AG04450 (cell line): ENCODE measurements at regions of chr11 and their contacts with region 1.

Region 1: DNA sequence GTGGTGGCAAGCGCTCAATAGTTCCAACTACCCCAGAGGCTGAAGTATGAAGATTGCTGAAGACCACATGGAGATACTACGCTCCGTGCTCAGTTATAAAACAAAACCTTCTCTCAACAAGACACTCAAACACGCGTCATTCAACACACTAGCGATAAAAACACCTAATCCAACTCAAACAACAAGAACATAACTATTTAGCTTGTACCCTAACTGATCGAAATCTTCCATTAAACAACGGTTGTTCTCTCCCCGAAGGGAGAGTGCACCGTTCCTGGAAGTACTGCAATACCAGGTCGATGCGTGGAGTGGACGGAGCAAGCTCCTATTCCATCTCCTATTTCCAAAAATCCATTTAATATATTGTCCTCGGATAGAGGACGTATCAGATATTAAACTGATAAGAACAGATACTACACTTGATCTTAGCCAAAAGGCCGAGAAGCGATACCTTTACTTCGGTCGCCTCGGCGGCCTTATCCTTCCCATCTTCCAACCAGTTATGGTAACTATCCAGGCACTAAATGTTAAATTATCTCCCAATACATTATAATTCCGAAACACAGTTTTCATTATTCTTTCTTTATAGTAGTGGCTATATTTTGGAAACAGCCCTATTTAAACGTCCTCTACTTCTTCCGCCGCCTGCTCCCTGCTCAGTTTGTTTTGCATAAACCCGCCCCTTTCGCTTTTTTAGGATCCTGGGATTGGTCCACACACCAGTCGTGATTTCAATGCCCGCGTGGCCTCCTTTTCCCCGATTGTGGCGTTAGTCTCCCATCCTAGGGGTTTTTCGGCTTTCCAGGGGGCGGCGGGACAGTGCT is 2.2 kb upstream of the WDR74 start:
- DNase-seq: peak; percentile 99
- H3K4me3 ChIP-seq: peak overlapping the region; percentile 50
- H3K27ac ChIP-seq: peak overlapping the region; percentile 97
- H3K27me3 ChIP-seq: no peaks in the 10 kb centered on the region
- CTCF ChIP-seq: no peak

Region 2: GRCh38 chr11:62621567-62622470 is 219.8 kb before region 1 on chr11 and contains the start of gene B3GAT3:
- CTCF ChIA-PET with region 1: no interaction called
- POLR2A ChIA-PET with region 1: interaction called, 11 read pairs
- DNase-seq: peak; percentile 96
- H3K4me3 ChIP-seq: peak within 1 kb of the TSS; percentile 86
- H3K27ac ChIP-seq: peak within 1 kb of the TSS; percentile 97
- H3K27me3 ChIP-seq: no peaks in the 10 kb centered on the region
- CTCF ChIP-seq: peak; percentile 13; the same call in 1 of the 2 replicates
- polyA plus RNA-seq, gene B3GAT3: 14.5 and 20.2 TPM in 2 replicates

Region 3: GRCh38 chr11:62726915-62727763 is 114.4 kb before region 1 on chr11 and contains the start of gene HNRNPUL2:
- CTCF ChIA-PET with region 1: no interaction called
- POLR2A ChIA-PET with region 1: interaction called, 41 read pairs
- DNase-seq: peak; percentile 99
- H3K4me3 ChIP-seq: peak within 1 kb of the TSS; percentile 99
- H3K27ac ChIP-seq: peak within 1 kb of the TSS; percentile 98
- H3K27me3 ChIP-seq: no peaks in the 10 kb centered on the region
- CTCF ChIP-seq: 0 out of 2 replicates have a peak, but pooled peaks have one; percentile 11
- polyA plus RNA-seq, gene HNRNPUL2: 26.6 and 28.2 TPM in 2 replicates

Region 4: GRCh38 chr11:62787005-62787759 is 54.4 kb before region 1 on chr11 and contains the start of gene TMEM179B:
- CTCF ChIA-PET with region 1: no interaction called
- POLR2A ChIA-PET with region 1: interaction called, 23 read pairs
- DNase-seq: peak; percentile 93
- H3K4me3 ChIP-seq: peak within 1 kb of the TSS; percentile 89
- H3K27ac ChIP-seq: peak within 1 kb of the TSS; percentile 73
- H3K27me3 ChIP-seq: no peaks in the 10 kb centered on the region
- CTCF ChIP-seq: peak; percentile 70
- polyA plus RNA-seq, gene TMEM179B: 51.7 and 63.8 TPM in 2 replicates

Region 5: DNA sequence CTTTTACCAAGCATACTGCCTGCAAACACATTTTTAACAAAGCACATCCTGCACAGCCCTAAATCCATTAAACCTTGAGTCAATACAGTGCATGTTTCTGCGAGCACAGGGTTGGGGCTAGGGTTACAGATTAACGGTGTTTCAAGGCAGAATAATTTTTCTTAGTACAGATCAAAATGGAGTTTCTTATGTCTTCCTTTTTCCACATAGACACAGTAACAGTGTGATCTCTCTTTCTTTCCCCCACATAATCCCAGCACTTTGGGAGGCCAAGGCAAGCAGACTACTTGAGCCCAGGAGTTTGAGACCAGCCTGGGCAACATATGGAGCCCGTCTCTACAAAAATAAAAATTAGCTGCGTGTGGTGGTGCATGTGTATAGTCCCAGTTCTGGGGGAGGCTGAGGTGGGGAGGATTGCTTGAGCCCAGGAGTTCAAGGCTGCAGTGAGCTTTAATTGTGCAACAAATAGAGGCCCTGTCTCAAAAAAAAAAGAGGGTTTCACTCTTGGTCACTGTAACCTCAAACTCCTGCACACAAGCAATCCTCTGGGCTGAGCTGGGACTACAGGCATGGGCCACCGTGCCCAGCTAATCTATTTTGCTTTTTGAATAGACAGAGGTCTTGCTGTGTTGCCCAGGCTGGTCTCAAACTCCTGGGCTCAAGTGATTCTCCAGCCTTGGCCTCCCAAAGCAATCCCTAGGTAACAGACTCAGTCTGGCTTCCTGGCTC is 19.4 kb after region 1 on chr11:
- CTCF ChIA-PET with region 1: interaction called, 3 read pairs
- POLR2A ChIA-PET with region 1: interaction called, 172 read pairs
- DNase-seq: no peak
- H3K4me3 ChIP-seq: no peak overlapping the region
- H3K27ac ChIP-seq: no peak overlapping the region
- H3K27me3 ChIP-seq: no peaks in the 10 kb centered on the region
- CTCF ChIP-seq: no peak

Region 6: DNA sequence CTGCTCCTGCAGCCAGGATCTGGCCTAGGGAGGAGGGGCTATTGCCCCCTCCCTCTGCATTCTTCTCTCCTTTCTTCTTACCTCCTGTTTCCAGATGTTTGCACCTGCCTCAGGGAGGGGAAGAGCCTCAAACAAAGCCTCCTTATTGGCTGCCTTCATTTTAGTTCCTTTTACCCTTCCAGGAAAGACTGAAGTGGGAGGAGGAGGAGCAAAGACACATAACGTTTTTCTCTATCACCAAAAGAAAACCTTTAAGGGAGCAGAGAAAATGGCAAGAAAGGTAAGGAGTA is 92.9 kb after region 1 on chr11:
- CTCF ChIA-PET with region 1: no interaction called
- POLR2A ChIA-PET with region 1: no interaction called
- DNase-seq: no peak
- H3K4me3 ChIP-seq: no peak overlapping the region
- H3K27ac ChIP-seq: no peak overlapping the region
- H3K27me3 ChIP-seq: peaks cover 8% of the 10 kb centered on the region
- CTCF ChIP-seq: no peak

Region 7: GRCh38 chr11:63227521-63228107 is 386.0 kb after region 1 on chr11:
- CTCF ChIA-PET with region 1: no interaction called
- POLR2A ChIA-PET with region 1: no interaction called
- DNase-seq: no peak
- H3K4me3 ChIP-seq: no peak overlapping the region
- H3K27ac ChIP-seq: no peak overlapping the region
- H3K27me3 ChIP-seq: no peaks in the 10 kb centered on the region
- CTCF ChIP-seq: no peak